ENCODE measurements at regions of chr1 and their contacts with region 1.

Region 1: DNA sequence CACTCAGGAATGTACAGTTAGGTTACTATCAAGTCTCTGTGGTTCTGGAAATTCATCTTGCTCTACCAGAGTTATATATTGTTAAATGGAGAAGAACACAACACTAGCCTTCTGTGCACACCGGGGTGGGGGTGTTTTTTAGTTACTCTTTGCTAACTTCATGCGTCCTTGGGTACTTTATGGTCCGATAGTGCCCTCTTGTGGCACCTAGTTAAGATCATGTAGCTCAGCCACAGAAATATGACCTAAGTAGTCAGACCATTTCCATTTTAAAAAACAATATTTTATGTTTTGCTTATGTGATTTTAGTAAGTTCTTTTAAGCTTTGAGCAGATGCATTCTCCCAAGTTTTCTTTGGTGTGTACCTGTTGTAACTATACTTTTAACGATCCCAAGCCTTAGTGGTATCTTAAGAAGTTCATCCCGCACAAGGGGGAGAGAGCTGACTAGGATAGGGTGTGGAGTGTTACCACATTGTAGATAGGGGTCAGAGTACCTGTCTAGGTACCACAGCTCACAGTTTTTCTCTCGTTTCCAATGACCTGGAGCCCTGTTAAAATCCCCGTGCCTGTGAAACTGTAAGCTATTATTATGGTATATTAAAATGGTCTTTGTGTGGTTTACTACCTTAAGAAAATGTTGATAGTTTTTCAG is 20.6 kb upstream of the SH3D21 start:
- DNase-seq: no peak
- ATAC-seq: peak; percentile 69

Region 2: DNA sequence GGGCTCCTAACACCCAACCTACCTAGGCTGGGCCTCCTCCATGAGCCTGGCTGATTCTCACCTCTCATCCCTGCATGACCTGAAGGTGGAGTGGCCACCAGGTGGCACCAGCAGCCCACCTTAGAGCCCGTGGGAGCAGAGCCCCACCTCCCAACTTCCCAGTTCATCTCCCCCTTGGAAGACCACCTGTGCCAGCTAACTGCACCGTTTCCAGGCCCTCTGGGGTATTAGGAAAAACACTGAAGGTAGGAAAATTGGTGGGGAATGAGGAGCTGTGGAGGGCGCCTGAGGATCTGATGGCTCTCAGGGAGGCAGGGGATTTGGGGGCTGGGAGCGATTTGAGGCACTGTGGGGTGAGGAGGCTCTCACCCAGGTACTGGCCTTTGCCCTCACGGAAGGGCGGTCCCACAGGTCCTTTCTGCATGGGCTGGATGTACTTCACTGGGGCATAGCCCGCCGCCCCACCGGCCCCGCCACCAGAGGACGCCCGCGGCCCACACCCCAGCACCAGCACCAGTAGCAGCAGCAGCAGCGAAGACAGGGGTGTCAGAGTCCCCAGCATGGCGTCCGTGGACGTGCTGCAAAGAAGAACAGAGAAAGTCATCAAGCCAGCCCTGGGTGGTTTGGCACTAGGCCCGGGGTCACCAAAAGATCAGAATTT is 185.8 kb before region 1 on chr1:
- intact Hi-C with region 1: loop called (anchors 5 kb)
- DNase-seq: peak; percentile 88
- ATAC-seq: peak; percentile 79

Region 3: GRCh38 chr1:36149237-36149972 is 136.2 kb before region 1 on chr1 and contains the start of gene TRAPPC3:
- intact Hi-C with region 1: loop called (anchors 1 kb)
- DNase-seq: peak; percentile 100
- ATAC-seq: peak; percentile 94
- total RNA-seq, gene TRAPPC3: 53.9 TPM

Region 4: GRCh38 chr1:36175137-36176095 is 110.2 kb before region 1 on chr1:
- intact Hi-C with region 1: no loop called
- DNase-seq: peak; percentile 71
- ATAC-seq: peak; percentile 83

Region 5: GRCh38 chr1:36187800-36188593 is 97.6 kb before region 1 on chr1:
- intact Hi-C with region 1: no loop called
- DNase-seq: peak; percentile 91
- ATAC-seq: peak; percentile 94

Region 6: DNA sequence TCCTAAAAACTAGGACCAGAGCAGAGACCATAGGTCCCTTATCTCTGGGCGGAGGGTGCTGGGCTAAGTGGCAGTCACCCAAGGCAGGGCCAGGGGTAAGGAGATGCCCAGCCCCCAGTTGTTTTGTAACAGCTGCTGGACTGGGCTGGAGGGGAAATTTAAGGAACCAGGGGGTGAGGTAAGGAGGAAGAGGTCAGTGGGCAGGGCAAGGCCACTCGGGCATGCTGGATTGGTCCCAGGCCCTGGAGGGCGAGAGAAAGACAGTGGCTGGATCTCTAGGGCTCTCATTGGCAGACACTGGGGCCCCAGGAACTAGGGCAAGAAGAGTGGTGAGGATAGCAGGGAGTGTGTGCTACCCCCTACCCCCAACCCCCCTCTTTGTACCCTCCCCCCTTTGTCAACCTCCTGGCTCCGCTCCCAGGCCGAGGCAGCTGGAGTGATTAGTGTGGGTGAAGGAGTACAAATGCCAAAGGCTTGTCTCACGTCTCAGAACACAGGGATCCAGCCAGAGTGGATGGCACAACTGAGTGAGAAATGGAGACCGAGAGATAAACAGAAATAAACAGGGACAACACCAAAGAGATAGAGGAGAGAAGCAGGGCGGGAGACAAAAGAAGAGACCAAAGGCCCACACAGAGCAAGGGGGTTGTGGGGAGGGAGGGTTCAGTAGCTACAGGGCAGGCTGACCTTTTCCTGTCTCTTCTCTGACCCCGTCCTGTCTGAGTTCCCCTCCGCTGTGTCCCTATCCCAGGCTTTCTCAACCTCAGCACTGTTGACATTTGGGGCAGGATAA is 81.8 kb before region 1 on chr1:
- intact Hi-C with region 1: loop called (anchors 5 kb)
- DNase-seq: peak; percentile 85
- ATAC-seq: peak; percentile 70

Region 7: DNA sequence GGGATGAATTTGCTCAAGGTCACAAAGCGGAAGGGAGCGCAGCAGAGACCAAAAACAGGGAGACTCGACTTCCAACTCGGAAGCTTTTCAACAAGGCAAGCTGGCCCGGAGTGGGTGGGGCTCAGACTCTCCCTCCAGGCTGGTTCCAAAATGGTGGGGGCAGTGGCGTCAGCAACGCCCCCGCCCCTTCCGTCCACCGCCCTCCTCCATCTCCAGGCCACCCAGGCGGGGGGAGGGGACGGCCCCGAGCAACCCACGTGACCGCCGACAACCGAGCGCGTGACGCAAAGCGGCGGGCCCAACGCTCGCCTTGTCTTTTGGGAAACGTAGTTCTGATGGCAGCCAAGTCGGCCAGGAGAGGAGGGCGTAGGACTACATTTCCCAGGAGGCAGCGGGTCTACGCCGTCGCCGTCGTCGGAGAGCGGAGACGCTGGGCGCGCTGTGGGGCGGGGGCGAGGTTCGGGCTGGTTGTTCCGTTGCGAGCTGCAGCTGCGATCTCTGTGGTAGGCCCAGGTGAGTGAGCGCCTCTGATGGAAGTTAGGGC is 61.5 kb before region 1 on chr1 and contains the start of gene THRAP3:
- intact Hi-C with region 1: loop called (anchors 2 kb)
- DNase-seq: peak; percentile 100
- ATAC-seq: peak; percentile 97
- total RNA-seq, gene THRAP3: 60.1 TPM

Region 8: GRCh38 chr1:36239941-36240637 is 45.5 kb before region 1 on chr1:
- intact Hi-C with region 1: loop called (anchors 5 kb)
- DNase-seq: no peak
- ATAC-seq: peak; percentile 95

Region 9: DNA sequence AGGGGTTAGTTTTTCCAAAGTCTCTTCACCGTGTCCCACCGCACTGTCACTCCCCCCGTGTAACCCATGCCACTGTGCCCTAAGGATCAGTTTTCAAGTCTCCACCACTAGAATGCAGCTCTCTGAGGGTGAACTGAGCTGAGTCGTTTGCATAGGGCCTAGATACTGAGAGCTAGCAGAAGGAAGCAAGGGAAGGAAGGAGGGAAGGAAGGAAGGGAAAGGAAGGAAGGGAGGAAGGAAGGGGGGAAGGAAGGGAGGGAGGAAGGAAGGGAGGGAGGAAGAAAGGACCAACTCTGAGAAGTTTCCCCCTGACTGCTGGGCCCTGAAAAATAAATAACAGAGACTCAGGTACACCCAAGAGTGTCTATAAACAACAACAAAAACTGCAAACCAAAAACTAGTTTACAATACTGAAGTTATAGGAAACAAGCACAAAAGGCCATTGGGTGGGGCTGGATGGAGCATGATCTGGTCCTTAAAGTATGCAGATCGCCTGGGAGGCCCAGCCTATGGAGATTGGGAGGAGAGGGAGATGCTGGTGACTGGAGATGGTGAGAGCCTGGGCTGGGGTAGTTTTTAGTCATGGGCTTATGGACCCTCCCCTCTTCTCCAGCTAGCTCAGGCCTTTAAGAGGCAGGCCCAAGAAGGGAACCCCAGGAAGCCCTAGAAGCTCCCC is 180.3 kb after region 1 on chr1:
- intact Hi-C with region 1: no loop called
- DNase-seq: no peak
- ATAC-seq: no peak

Measured in Right ventricle myocardium inferior (tissue), 1 donor.